H1 (cell line): ENCODE measurements at regions of chr1 and their contacts with region 1.

Region 1: DNA sequence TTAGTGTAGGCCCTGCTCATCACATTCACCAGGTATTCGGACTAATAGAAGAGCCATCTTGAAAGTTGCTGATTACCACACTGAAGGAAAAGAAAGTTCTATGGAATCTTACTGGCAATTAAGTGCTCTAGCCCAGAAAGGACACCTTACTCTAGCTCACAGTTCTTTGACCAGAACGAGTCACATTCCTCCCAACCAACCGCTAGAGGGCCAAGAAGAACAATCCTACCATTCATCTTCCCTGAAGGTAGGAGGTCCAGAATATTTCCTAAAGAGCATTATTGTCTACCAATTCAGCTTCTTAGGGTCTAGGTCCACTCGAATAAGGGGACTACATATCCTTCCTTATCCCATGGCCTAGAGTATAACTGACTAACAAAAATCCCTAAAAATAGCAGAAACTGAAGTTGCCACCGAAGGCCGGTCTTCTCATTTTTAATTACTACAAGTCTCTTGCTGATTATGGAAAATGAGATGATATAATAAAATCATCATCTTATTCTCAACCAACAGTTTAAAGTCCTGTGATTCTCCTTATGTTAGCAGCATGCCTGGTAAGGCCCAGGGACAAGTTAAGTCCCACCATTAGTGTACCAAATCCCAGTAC is 2.7 kb upstream of the FMO1 start:
- DNase-seq: no peak
- H3K4me3 ChIP-seq: no peak overlapping the region
- H3K27ac ChIP-seq: no peak overlapping the region
- H3K4me1 ChIP-seq: peaks cover 0 to 4% (median 0%) of the 10 kb centered on the region in 4 experiments; a peak in 2 of 7 replicates
- H3K27me3 ChIP-seq: no peaks in the 10 kb centered on the region; a peak in 1 of 7 replicates
- CTCF ChIP-seq: peak in 2 of 3 experiments; percentile 78 to 87; a peak in 3 of 4 replicates
- EP300 ChIP-seq: no peak
- POLR2A ChIP-seq: no peak
- RAD21 ChIP-seq: peak; percentile 55 to 72

Region 2: GRCh38 chr1:171256940-171257606 is 11.5 kb after region 1 on chr1:
- CTCF ChIA-PET with region 1: interaction called, 43 read pairs
- POLR2A ChIA-PET with region 1: no interaction called
- DNase-seq: no peak
- H3K4me3 ChIP-seq: no peak overlapping the region
- H3K27ac ChIP-seq: no peak overlapping the region
- H3K4me1 ChIP-seq: peaks cover 9 to 20% (median 17%) of the 10 kb centered on the region in 4 experiments
- H3K27me3 ChIP-seq: no peaks in the 10 kb centered on the region
- CTCF ChIP-seq: no peak
- EP300 ChIP-seq: no peak
- POLR2A ChIP-seq: no peak
- RAD21 ChIP-seq: no peak

Region 3: DNA sequence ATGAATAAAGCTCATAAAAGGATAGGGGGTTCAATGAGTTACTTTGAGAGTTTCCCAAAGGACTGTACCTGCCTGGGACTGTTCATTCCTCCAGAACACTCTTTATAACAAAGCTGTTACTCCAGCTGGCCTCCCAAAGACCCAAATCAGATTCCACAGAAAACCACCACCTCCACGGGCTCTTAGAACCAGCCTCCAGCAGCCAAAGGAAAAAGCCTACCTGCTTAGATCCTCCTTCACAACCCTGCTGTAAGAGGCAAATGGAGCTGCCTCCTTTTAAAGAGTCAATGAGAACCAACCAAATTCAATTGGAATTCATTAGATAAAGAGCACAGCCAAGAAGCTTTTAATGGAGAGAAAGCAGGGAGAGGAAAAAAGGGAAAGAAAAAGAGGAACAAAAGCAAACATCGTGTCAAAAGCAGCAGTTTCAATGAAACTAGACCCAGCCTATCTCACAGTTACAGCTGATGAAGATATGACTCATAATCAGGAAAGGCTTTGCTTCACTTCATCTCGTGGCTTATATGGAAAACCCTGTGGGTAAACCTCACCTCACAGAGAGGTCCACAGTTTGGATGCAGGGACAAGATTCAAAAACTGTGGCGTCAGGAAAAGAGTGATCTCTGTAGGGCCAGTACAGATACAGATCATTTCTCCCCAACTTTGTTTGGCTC is 40.6 kb after region 1 on chr1:
- CTCF ChIA-PET with region 1: interaction called, 12 read pairs
- POLR2A ChIA-PET with region 1: no interaction called
- DNase-seq: no peak
- H3K4me3 ChIP-seq: no peak overlapping the region
- H3K27ac ChIP-seq: no peak overlapping the region
- H3K4me1 ChIP-seq: no peaks in the 10 kb centered on the region
- H3K27me3 ChIP-seq: peaks cover 0 to 2% (median 0%) of the 10 kb centered on the region in 4 experiments; a peak in 1 of 7 replicates
- CTCF ChIP-seq: no peak
- EP300 ChIP-seq: no peak
- POLR2A ChIP-seq: no peak
- RAD21 ChIP-seq: no peak

Region 4: DNA sequence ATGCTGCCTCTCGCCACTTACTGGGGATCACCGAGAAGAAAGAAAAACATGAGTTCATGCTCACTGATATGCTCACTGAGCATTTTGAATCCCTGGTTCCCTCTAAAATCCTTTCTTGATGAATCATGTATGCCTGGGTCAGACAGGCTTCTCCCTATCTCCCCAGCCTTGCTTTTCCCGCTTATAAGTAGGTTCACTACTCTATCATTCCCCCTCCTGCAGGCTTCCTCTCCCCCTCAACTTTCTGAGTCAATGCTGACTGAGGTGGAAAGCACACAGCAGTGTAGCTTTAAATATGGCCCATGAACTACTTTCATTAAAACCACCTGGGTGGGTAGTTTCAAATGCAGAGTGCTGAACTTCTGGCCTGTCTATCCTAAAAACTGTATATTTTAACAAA is 110.2 kb after region 1 on chr1:
- CTCF ChIA-PET with region 1: interaction called, 13 read pairs
- POLR2A ChIA-PET with region 1: no interaction called
- DNase-seq: no peak
- H3K4me3 ChIP-seq: no peak overlapping the region
- H3K27ac ChIP-seq: no peak overlapping the region
- H3K4me1 ChIP-seq: peaks cover 0 to 5% (median under 1%) of the 10 kb centered on the region in 4 experiments; a peak in 2 of 7 replicates
- H3K27me3 ChIP-seq: no peaks in the 10 kb centered on the region
- CTCF ChIP-seq: no peak
- EP300 ChIP-seq: no peak
- POLR2A ChIP-seq: no peak
- RAD21 ChIP-seq: no peak

Region 5: DNA sequence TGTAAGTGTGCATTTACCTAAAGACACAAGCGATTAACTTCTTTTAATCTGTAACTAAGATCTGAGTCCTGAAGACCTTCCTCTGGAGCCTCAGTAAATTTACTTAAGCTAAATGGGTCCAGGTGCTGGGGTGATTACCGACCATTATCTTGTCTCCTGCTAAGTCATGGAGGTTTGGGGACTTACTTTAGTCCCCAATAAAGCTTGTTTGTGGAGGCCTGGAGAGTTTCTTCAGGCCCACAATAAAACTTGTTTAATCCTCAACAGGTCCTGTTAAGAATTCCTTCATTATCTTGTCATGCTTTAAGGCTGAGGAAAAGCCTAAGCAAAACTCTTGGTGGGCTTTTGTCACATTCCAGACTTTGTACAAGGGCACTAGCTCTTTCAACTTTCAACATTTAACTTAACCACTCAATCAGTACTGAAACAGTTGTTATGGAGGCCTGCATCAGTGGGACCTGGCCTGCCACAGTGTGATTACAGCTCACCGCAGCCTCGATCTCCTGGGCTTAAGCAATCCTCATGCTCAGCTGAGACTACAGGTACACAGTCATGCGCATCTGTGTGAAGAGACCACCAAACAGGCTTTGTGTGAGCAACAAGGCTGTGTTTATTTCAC is 152.4 kb after region 1 on chr1:
- CTCF ChIA-PET with region 1: interaction called, 15 read pairs
- POLR2A ChIA-PET with region 1: no interaction called
- DNase-seq: no peak
- H3K4me3 ChIP-seq: no peak overlapping the region
- H3K27ac ChIP-seq: no peak overlapping the region
- H3K4me1 ChIP-seq: peaks cover 0 to 4% (median 1%) of the 10 kb centered on the region in 4 experiments; a peak in 4 of 7 replicates
- H3K27me3 ChIP-seq: no peaks in the 10 kb centered on the region
- CTCF ChIP-seq: no peak
- EP300 ChIP-seq: no peak
- POLR2A ChIP-seq: no peak
- RAD21 ChIP-seq: no peak